MCF 10A (cell line): ENCODE measurements at regions of chr3 and their contacts with region 1.

Region 1: GRCh38 chr3:42025370-42026138 is 63.7 kb upstream of the ULK4 start:
- DNase-seq: peak; percentile 72
- H3K4me3 Mint-ChIP-seq: peak overlapping the region; percentile 17
- H3K27ac Mint-ChIP-seq: peak overlapping the region; percentile 66
- H3K4me1 Mint-ChIP-seq: peaks cover 50% of the 10 kb centered on the region
- H3K27me3 Mint-ChIP-seq: no peaks in the 10 kb centered on the region
- CTCF ChIP-seq: no peak

Region 2: GRCh38 chr3:42012935-42013690 is 12.4 kb before region 1 on chr3:
- CTCF ChIA-PET with region 1: interaction called, 8 read pairs
- POLR2A ChIA-PET with region 1: interaction called, 13 read pairs
- intact Hi-C with region 1: no loop called
- DNase-seq: peak; percentile 59
- H3K4me3 Mint-ChIP-seq: peak overlapping the region; percentile 78
- H3K27ac Mint-ChIP-seq: no peak overlapping the region
- H3K4me1 Mint-ChIP-seq: peaks cover 24% of the 10 kb centered on the region
- H3K27me3 Mint-ChIP-seq: no peaks in the 10 kb centered on the region
- CTCF ChIP-seq: no peak

Region 3: GRCh38 chr3:42045719-42046243 is 20.2 kb after region 1 on chr3:
- CTCF ChIA-PET with region 1: interaction called, 3 read pairs
- POLR2A ChIA-PET with region 1: interaction called, 16 read pairs
- intact Hi-C with region 1: no loop called
- DNase-seq: no peak
- H3K4me3 Mint-ChIP-seq: no peak overlapping the region
- H3K27ac Mint-ChIP-seq: peak overlapping the region; percentile 49
- H3K4me1 Mint-ChIP-seq: peaks cover 10% of the 10 kb centered on the region
- H3K27me3 Mint-ChIP-seq: no peaks in the 10 kb centered on the region
- CTCF ChIP-seq: no peak

Region 4: GRCh38 chr3:42071904-42072592 is 46.5 kb after region 1 on chr3:
- CTCF ChIA-PET with region 1: interaction called, 4 read pairs
- POLR2A ChIA-PET with region 1: interaction called, 20 read pairs
- intact Hi-C with region 1: no loop called
- DNase-seq: peak; percentile 94
- H3K4me3 Mint-ChIP-seq: peak overlapping the region; percentile 50
- H3K27ac Mint-ChIP-seq: peak overlapping the region; percentile 43
- H3K4me1 Mint-ChIP-seq: peaks cover 34% of the 10 kb centered on the region
- H3K27me3 Mint-ChIP-seq: no peaks in the 10 kb centered on the region
- CTCF ChIP-seq: no peak

Region 5: DNA sequence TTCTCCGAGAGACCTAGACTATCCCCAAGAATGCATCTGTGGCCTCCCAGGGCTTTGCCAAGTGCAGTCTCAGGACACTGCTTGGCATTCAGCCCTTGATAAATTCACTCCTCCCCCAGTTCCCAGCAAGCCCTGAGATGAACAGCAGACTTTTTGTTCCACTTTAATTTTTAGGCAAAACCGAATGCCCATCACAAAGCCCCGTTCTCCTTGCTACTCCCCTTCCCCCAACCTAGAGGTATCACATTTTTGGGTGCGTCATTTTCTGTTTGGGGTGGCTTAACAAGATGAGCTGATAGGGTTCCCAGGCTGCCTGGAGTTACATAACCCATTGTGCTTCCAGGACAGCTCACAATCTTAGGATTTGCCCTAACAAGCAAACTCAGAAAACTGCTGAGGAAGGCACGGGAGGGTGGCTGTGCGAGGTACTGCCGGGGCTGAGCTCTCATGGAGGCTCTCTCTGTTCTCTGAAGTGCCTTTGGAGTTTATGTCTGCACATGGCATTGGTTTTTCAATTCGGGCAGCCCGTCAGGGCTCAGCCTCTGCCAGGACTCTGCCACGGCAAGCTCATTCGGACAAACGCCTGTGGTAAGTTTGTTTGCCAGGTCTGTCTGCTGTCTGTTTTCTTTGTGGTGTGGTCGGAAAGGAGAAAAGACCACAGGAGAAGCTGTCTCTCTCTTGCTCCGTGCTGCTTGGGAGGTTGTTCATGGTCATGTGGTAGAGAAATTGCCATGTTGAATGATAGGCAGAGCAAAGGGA is 65.6 kb after region 1 on chr3 and contains the start of gene TRAK1:
- CTCF ChIA-PET with region 1: interaction called, 5 read pairs
- POLR2A ChIA-PET with region 1: interaction called, 17 read pairs
- intact Hi-C with region 1: no loop called
- DNase-seq: peak; percentile 91
- H3K4me3 Mint-ChIP-seq: peak within 1 kb of the TSS; percentile 70
- H3K27ac Mint-ChIP-seq: peak within 1 kb of the TSS; percentile 72
- H3K4me1 Mint-ChIP-seq: peaks cover 20% of the 10 kb centered on the region
- H3K27me3 Mint-ChIP-seq: no peaks in the 10 kb centered on the region
- CTCF ChIP-seq: no peak
- total RNA-seq, gene TRAK1: 32.8 and 33.2 TPM in 2 replicates